ENCODE measurements at regions of chr20 and their contacts with region 1.

Region 1: DNA sequence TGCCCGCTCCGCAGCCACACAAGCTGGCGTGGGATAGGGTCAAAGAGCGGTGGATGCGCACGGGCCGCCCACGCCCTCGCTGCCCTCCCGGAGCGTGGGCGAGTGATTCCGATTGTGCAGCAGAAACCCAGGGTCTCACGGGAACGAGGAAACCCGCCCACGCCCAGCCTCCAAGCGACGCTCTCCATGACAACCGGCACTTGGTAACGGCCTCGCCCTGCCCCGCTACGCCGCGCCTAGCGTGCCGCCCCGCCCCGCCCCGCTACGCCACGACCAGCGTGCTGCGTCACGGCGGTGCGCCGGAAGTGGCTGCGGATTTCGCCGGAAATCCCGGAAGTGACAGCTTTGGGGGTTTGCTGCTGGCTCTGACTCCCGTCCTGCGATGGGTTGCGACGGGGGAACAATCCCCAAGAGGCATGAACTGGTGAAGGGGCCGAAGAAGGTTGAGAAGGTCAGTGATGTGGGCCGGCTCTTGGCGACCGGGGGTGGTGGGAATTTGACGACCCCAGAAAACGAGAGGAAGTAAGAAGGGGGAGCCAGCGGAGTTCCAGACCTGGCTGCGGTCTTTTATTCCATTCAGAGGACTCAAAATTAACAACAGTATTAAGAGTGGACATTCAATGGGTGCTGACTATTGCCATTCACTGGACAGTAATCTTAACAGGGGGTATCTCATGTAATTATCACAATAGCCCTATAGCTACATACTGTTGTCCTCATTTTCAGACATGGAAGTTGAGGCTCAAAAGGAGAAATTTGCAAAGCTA is at the start of gene RTF2:
- DNase-seq: peak; percentile 95
- H3K4me3 ChIP-seq: peak within 1 kb of the TSS; percentile 70
- H3K27ac ChIP-seq: peak within 1 kb of the TSS; percentile 70
- H3K4me1 ChIP-seq: peaks cover 12% of the 10 kb centered on the region
- H3K27me3 ChIP-seq: no peaks in the 10 kb centered on the region
- CTCF ChIP-seq: no peak
- total RNA-seq, gene RTF2: 86.7 and 99.1 TPM in 2 replicates

Region 2: DNA sequence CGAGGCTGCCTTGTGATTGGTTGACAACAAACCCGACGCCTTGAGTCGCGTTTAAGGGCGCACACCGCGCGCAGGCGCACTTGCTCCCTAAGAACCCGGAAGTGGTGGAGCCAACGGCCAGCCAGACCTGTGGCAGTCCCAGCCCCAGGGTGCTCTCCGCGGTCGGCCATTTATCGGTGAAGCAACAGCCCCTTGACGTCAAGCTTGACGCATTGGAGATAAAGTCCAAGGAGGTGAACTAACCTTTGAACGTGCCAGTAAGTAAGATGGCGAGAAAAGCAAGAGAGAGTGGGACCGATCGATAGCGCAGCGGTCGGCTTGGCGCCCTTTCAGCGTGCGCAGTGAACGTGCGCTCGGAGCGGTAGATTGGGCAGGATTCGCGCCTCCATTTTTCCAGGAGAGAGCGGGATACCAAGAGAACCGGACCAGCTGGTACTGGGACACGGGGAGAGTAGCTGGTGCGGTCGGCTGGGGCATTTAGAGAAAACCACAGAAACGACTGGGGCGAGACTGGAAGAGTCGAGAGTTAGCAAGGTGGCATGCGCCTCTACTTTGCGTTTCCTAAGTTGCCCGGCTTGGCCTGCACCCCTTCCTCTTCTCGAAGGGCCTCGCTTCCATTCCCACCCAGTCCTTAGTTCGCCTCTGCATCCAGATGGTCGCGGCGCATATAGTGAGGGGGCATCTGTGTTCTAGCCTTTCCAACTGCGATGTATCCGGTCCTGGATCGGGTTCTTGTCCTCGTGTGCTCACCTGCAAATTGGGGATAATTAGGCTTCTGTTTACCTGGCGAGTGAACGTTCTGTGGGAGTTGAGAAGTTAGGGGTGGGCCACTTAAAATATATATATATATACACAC is 76.0 kb before region 1 on chr20 and contains the start of gene CSTF1:
- CTCF ChIA-PET with region 1: no interaction called
- POLR2A ChIA-PET with region 1: no interaction called
- intact Hi-C with region 1: loop called (anchors 5 kb)
- DNase-seq: peak; percentile 99
- H3K4me3 ChIP-seq: peak within 1 kb of the TSS; percentile 81
- H3K27ac ChIP-seq: peak within 1 kb of the TSS; percentile 88
- H3K4me1 ChIP-seq: peaks cover 22% of the 10 kb centered on the region
- H3K27me3 ChIP-seq: no peaks in the 10 kb centered on the region
- CTCF ChIP-seq: no peak
- total RNA-seq, gene CSTF1: 52.5 and 58.2 TPM in 2 replicates